ENCODE measurements at regions of chr11 and their contacts with region 1.

Region 1: DNA sequence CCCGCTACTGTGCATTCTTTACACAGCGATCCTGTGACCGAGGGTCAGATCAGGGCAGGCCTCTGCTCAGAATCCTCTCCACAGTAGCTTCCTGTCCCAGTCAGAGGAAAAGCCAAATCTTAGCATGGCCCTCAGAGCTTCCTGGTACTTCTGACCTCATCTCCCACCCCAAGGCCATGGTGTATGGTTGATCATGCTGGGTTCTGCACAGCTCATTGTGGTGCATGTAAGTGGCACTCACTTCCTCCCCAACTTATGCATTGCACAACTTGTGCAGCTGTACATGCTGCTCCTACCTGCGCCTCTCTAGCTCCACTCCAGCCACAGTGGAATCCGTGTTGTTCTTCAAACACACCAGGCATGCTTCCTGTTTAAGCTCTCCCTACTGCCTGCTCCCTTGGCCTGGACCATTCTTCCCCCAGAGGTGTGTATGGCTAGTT is 20.3 kb downstream of the BMAL1 start:
- DNase-seq: peak; percentile 57
- ATAC-seq: peak; percentile 97
- H3K4me3 Mint-ChIP-seq: peak overlapping the region; percentile 52
- H3K27ac Mint-ChIP-seq: peak overlapping the region; percentile 71
- H3K4me1 Mint-ChIP-seq: peaks cover 71% of the 10 kb centered on the region
- H3K27me3 Mint-ChIP-seq: no peaks in the 10 kb centered on the region

Region 2: DNA sequence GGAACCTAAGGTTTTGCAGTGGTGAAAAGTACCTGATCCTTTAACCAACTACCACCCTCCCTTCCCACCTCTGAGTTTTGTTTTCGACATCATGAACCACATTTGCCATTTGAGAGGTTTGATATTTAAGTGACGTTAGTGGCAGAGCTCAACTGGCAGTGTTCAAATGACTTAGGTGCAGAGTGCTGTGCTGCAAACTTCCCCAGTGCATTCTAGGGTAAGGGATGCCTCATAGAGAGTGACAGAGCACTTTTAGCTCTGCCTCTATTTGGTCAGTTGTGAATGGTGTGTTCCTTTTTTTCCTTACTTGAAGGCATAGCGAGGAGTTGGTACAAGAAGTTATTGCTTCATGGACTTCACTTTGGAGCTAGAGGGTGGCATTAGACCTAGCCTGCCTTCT is 10.9 kb before region 1 on chr11:
- POLR2A ChIA-PET with region 1: interaction called, 11 read pairs
- DNase-seq: no peak
- ATAC-seq: peak; percentile 85
- H3K4me3 Mint-ChIP-seq: peak overlapping the region; percentile 56
- H3K27ac Mint-ChIP-seq: peak overlapping the region; percentile 50
- H3K4me1 Mint-ChIP-seq: peaks cover 75% of the 10 kb centered on the region
- H3K27me3 Mint-ChIP-seq: no peaks in the 10 kb centered on the region

Region 3: DNA sequence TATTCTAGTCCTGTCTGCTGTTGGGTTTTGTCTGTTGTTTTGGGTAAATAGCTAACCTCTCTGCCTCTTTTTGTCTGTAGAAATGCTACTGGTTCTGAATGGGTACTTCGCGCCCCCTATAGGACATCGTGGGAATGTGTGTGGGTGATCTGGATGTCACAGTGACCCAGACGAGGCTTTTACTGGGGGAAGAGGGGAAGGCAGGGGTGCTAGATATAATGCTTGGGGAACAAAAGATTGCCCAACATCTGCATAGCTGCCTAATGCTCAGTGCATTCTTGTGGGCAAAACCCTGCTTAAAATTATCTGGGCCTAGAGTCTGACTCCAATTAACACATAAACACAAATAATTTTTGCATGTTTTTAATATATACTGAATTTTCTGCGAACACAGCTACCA is 37.4 kb after region 1 on chr11:
- POLR2A ChIA-PET with region 1: interaction called, 11 read pairs
- DNase-seq: peak; percentile 61
- ATAC-seq: peak; percentile 40
- H3K4me3 Mint-ChIP-seq: no peak overlapping the region
- H3K27ac Mint-ChIP-seq: no peak overlapping the region
- H3K4me1 Mint-ChIP-seq: peaks cover 58% of the 10 kb centered on the region
- H3K27me3 Mint-ChIP-seq: no peaks in the 10 kb centered on the region

Measured in activated naive CD8-positive, alpha-beta T cell treated with anti-CD3 and anti-CD28 coated beads, Interleukin-2, amount 10 ng/mL, durations not matched to agents 7 days and 5 days (primary cell).